ENCODE measurements at regions of chr1 and their contacts with region 1.

Region 1: DNA sequence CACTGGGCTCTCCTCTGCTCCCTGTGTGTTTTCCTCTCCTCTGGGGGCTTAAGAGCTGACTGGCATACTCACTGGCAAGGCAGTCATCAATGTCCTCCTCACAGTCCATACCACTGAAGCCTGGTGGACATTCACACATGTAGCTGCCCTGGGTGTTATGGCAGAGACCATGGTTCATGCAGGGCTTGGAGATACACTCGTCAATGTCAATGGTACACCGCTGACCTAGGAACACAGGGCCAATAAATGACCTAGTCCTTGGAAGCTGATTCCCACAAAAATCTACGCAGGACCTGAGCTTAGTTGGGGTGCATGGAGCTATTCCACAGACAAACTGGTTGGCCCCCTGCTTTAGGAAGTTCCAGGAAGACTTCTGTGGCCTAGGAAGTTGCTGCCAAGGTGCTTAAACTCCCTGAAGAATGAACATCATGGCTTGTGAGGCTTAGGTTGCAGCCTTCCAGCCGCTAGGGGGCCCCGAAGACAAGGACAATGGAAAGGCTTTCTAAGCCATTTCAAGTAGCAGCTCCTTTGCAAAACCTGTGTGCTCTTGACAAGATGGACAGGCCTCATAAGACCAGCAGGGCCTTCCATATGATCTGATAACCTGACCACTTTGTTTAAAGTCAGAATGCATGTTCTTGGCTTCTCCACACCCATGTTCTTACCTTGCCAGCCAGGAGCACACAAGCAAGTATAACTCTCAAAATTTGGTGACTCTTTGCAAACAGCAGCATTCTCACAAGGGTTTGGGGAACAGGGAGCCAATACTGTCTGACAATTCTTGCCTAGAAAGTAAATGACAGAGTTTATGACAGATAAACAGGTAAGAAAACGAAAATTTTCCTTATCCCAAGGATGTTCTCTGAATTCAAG is 52.3 kb upstream of the ADAM30 start:
- DNase-seq: peak; percentile 86
- H3K4me3 ChIP-seq: no peak overlapping the region
- H3K27ac ChIP-seq: peak overlapping the region in 1 of 4 donors; percentile 2
- H3K4me1 ChIP-seq: peaks cover 0 to 21% (median 5%) of the 10 kb centered on the region in 4 donors
- H3K27me3 ChIP-seq: no peaks in the 10 kb centered on the region
- CTCF ChIP-seq: peak; percentile 67 to 87 (median 70)
- EP300 ChIP-seq: no peak
- POLR2A ChIP-seq: no peak

Region 2: GRCh38 chr1:119711804-119712341 is 236.7 kb before region 1 on chr1 and contains the start of gene PHGDH:
- intact Hi-C with region 1: no loop called
- DNase-seq: peak; percentile 87
- H3K4me3 ChIP-seq: peak within 1 kb of the TSS; percentile 53 to 72 (median 67)
- H3K27ac ChIP-seq: peak within 1 kb of the TSS; percentile 78 to 89 (median 82)
- H3K4me1 ChIP-seq: peaks cover 0 to 30% (median 19%) of the 10 kb centered on the region in 4 donors
- H3K27me3 ChIP-seq: no peaks in the 10 kb centered on the region
- CTCF ChIP-seq: no peak
- EP300 ChIP-seq: no peak
- POLR2A ChIP-seq: peak; percentile 26 to 56
- total RNA-seq, gene PHGDH: 15.8 to 37.7 (median 26.0) TPM

Region 3: GRCh38 chr1:119878171-119878570 is 70.4 kb before region 1 on chr1:
- intact Hi-C with region 1: loop called (anchors 5 kb)
- DNase-seq: no peak
- H3K4me3 ChIP-seq: no peak overlapping the region
- H3K27ac ChIP-seq: no peak overlapping the region
- H3K4me1 ChIP-seq: peaks cover 0 to 16% (median 12%) of the 10 kb centered on the region in 4 donors
- H3K27me3 ChIP-seq: no peaks in the 10 kb centered on the region
- CTCF ChIP-seq: no peak
- EP300 ChIP-seq: no peak
- POLR2A ChIP-seq: no peak

Region 4: GRCh38 chr1:119906927-119907652 is 41.5 kb before region 1 on chr1:
- intact Hi-C with region 1: no loop called
- DNase-seq: no peak
- H3K4me3 ChIP-seq: no peak overlapping the region
- H3K27ac ChIP-seq: no peak overlapping the region
- H3K4me1 ChIP-seq: no peaks in the 10 kb centered on the region
- H3K27me3 ChIP-seq: no peaks in the 10 kb centered on the region
- CTCF ChIP-seq: no peak
- EP300 ChIP-seq: no peak
- POLR2A ChIP-seq: no peak